ENCODE measurements at regions of chr6 and their contacts with region 1.

Region 1: GRCh38 chr6:50030777-50031562 is 9.2 kb upstream of the DEFB110 start:
- ATAC-seq: peak in 3 of 8 experiments; percentile 34 to 82 (median 49)
- H3K4me3 ChIP-seq: no peak overlapping the region
- H3K27ac ChIP-seq: no peak overlapping the region
- H3K4me1 ChIP-seq: no peaks in the 10 kb centered on the region

Region 2: GRCh38 chr6:49646130-49646824 is 384.7 kb before region 1 on chr6:
- in situ Hi-C with region 1: loop called in 1 of 9 experiments (anchors 25 kb)
- ATAC-seq: no peak
- H3K4me3 ChIP-seq: no peak overlapping the region
- H3K27ac ChIP-seq: no peak overlapping the region
- H3K4me1 ChIP-seq: no peaks in the 10 kb centered on the region

Measured in motor neuron (in vitro differentiated cells).